Panc1 (cell line): ENCODE measurements at regions of chr11 and their contacts with region 1.

Region 1: GRCh38 chr11:34405079-34405858 is 33.5 kb upstream of the CAT start:
- DNase-seq: no peak
- ATAC-seq: no peak
- H3K4me3 ChIP-seq: no peak overlapping the region
- H3K27ac ChIP-seq: no peak overlapping the region
- H3K4me1 ChIP-seq: no peaks in the 10 kb centered on the region; the same call in 1 of the 2 replicates
- H3K27me3 ChIP-seq: no peaks in the 10 kb centered on the region
- CTCF ChIP-seq: no peak

Region 2: DNA sequence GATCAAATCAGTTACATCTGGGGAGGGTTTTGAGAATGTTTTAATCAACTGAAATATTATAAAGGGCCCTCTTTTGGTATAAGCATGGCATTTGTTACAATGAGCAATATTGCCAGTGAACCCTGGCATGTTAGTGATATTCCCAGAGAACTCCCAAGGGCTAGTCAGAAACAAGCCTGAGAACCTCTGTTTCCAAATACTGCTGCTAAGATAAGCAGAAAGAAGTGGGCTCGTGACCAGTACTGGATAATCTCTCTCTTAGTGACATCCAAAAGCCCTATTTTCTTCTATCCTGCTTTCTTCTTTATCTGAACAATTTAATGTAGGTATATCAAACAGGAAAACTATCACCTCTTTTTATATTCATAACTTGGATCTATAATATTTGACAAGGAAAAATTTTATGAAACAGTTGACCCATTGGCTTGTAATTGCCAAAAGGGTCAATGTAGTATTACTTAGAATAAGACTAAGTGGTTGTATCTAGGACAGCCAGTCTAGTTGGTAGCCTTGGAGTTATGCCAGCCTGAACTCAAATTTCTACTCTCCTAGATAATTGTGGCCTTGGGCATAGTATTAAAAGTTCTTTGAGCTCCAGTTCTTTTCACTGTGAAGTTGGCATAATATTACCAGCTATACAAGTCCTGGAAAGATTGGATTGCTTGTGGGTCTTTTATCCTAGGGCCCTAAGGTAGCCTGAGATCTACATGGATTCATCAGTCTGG is 49.2 kb after region 1 on chr11:
- CTCF ChIA-PET with region 1: no interaction called
- POLR2A ChIA-PET with region 1: interaction called, 11 read pairs
- in situ Hi-C with region 1: no loop called
- intact Hi-C with region 1: no loop called
- DNase-seq: no peak
- ATAC-seq: no peak
- H3K4me3 ChIP-seq: no peak overlapping the region
- H3K27ac ChIP-seq: no peak overlapping the region
- H3K4me1 ChIP-seq: no peaks in the 10 kb centered on the region
- H3K27me3 ChIP-seq: no peaks in the 10 kb centered on the region
- CTCF ChIP-seq: no peak